Dendritic cell treated with granulocyte-macrophage colony-stimulating factor and Interleukin-4, amounts not matched to agents 40 ng/mL and 50 ng/mL, for 4 days (primary cell): ENCODE measurements at regions of chr19 and their contacts with region 1.

Region 1: DNA sequence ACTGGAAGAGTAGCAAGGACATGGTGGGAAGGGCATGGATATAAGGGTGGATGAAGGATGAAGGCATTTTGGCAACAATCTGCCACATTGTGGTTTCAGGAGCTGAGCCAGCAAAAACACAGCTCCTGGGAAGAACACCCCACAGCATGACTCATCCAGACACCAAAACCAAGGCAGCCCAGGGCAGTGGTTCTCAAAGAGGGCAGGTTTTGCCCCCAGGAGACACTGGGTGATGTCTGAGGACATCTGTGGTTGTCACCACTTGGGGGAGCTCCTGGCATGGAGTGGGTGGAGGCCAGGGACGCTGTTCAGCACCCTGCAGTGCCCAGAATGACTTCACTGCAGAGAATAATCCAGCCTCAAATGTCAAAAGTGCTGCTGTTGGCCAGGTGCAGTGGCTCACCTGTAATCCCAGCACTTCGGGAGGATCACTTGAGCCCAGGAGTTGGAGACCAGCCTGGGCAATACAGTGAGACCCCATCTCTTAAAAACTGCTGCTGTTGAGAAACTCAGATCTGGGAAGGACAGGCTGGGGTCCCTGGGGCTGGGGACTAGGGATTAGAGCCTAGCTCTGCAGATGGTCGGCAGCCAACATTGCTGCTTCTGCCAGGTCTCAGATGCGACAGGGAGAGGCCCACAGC is 16.1 kb downstream of the ZFR2 start:
- H3K4me3 Mint-ChIP-seq: no peak overlapping the region
- H3K27ac Mint-ChIP-seq: no peak overlapping the region
- H3K4me1 Mint-ChIP-seq: no peaks in the 10 kb centered on the region
- H3K27me3 Mint-ChIP-seq: peaks cover 13% of the 10 kb centered on the region

Region 2: DNA sequence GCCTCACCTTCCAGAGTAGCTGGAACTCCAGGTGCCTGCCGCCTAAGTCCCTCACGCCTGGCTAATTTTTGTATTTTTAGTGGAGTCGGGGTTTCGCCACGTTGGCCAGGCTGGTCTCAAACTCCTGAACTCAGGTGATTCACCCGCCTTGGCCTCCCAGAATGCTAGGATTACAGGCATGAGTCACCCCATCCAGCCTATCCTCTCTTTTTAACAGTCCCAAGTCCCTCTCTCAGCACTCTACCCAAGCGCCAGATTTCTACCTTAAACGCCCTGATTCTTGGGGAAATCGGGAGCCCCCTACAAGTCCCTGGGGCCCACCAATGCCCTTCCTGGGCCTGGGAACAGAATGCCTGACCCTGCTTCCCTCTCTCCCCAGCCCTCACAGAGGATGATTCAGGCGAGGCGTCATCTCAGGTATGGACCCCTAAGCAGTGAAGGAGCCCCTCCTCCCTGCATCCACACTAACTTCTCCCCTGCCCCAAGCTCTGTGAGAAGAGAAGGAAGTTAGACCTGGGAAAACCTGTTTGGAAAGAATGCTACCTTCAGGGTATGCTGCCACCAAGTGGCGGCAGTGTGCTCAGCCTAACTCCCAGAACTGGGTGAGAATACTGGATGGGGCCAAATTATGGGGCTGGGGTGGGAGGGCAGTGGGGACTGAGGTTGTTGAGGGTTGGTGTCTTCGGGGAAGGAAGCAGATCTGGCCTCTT is 355.8 kb after region 1 on chr19:
- intact Hi-C with region 1: loop called (anchors 10 kb)
- H3K4me3 Mint-ChIP-seq: no peak overlapping the region
- H3K27ac Mint-ChIP-seq: no peak overlapping the region
- H3K4me1 Mint-ChIP-seq: no peaks in the 10 kb centered on the region
- H3K27me3 Mint-ChIP-seq: peaks cover 15% of the 10 kb centered on the region